ENCODE measurements at regions of chr20 and their contacts with region 1.

Region 1: DNA sequence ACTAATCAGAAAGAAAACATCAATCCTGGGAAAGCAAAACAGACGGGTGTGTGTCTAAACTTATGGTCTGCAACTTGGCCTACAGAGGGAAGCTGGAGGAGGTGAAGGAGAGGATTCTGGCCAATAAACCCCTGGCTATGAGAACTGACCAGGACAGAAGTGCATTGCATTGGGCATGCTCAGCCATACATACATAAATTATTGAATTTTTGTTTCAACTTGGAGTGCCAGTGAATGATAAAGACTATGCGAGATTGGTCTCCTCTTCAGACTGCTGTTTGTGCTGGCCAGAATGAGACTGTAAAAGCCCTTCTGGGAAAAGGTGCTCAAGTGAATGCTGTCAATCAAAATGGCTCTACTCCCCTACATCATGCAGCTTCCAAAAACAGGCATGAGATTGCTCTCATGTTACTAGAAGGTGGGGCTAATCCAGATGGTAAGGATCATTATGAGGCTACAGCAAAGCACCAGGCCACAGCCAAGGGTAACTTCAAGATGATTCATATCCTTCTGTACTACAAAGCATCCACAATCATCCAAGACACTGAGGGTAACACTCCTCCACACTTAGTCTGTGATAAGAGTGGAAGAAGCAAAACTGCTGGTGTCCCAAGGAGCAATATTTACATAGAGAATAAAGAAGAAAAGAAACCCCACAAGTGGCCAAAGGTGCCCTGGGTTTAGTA is 17.4 kb downstream of the ADNP start:
- DNase-seq: peak; percentile 68
- H3K4me3 Mint-ChIP-seq: no peak overlapping the region
- H3K27ac Mint-ChIP-seq: peak overlapping the region; percentile 6
- H3K4me1 Mint-ChIP-seq: peaks cover 57% of the 10 kb centered on the region
- H3K27me3 Mint-ChIP-seq: no peaks in the 10 kb centered on the region
- CTCF ChIP-seq: no peak

Region 2: DNA sequence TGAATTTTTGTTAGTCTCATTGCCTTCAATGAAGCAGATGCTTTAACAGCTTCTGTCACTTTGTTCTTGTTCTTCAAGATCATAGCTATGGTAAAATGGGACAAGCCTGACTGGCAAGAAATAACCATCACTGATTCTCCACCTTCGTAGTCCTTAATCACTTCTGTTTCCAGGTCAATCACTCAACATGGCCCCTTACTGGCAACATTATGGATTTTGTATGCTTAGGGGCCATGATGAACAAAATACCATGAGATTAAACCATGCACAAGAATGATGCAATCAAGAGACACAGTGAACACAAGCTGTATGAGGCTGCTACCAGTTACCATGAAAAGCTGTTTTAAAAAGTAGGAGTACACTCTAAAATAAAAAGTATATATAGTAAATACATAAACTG is 15.4 kb before region 1 on chr20:
- CTCF ChIA-PET with region 1: interaction called, 6 read pairs
- POLR2A ChIA-PET with region 1: interaction called, 13 read pairs
- intact Hi-C with region 1: no loop called
- DNase-seq: no peak
- H3K4me3 Mint-ChIP-seq: no peak overlapping the region
- H3K27ac Mint-ChIP-seq: peak overlapping the region; percentile 48
- H3K4me1 Mint-ChIP-seq: peaks cover 6% of the 10 kb centered on the region
- H3K27me3 Mint-ChIP-seq: no peaks in the 10 kb centered on the region
- CTCF ChIP-seq: no peak